Calu3 (cell line): ENCODE measurements at regions of chr6 and their contacts with region 1.

Region 1: DNA sequence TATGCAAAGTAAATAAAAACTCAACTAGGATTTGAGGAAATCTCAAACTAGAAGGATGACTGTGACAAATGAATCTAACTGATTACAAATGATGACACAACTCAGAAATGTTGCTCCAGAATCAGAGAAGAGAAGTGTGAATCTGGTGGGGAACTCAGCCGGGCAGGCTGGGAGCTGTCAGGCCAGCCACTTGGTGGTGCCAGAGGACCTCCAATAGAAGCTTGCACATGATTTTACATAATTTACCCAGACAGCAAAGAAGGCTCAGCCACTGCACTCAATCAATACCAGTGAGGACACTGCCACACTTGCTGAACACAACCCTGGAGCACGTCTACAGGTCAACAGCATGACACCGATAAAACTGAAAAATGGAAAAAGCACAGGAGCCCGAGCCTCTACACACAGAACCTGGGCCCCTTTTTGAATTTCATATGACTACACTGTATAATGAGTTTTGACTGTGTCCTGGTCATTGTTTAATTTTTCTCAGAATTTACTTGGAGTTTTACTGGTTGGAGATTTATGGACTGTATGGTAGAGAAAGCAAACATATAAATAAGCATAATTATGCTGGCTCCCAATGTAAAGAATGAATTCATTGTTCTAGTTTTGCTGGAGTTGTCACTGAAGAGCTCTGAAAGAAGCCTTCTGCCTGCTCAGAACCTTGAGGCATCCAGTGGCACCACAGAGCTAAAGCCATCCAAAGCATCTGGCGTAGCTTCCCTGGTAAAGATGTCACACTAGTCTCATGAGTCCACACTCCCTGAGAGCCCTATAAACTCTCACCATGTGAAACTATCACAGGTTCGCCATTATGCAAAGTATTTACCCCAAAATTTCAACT is 296.5 kb downstream of the THBS2 start:
- DNase-seq: peak; percentile 80
- H3K4me3 Mint-ChIP-seq: no peak overlapping the region
- H3K27ac Mint-ChIP-seq: peak overlapping the region; percentile 95
- H3K4me1 Mint-ChIP-seq: peaks cover 22% of the 10 kb centered on the region
- H3K27me3 Mint-ChIP-seq: no peaks in the 10 kb centered on the region
- CTCF ChIP-seq: peak; percentile 80

Region 2: DNA sequence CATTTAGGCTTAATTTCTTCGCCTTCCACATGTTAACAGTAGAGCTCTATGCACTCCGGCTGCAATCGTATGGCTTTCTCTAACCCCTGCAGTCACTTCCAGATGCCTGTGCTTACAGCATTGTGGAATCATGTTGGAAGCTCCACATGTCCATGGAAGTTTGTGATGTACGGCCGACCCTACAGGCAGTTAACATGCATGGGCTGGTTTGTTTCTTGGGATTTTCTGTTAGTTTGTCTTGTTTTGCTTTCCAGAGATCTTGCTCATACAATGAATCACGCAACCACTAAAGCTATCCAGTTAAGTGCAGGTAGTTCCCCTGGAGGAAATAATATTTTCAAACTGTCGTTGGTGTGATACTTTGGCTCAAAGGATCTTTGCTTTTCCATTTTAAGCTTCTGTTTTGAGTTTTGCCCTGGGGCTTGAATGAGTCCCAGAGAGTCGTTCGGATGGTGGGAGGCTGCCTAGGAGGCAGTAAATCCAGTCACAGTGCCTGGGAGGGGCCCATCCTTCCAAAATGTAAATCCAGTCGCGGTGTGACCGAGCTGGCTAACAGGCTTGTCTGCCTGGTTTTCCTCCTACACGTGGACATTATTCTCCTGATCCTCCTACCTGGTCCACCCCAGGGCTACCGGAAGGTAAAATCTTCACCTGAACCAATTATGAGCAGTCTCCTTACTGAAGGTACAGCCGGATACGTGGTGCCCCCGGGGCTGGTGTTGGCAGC is 290.2 kb before region 1 on chr6:
- CTCF ChIA-PET with region 1: no interaction called
- intact Hi-C with region 1: no loop called
- DNase-seq: no peak
- H3K4me3 Mint-ChIP-seq: no peak overlapping the region
- H3K27ac Mint-ChIP-seq: peak overlapping the region; percentile 83
- H3K4me1 Mint-ChIP-seq: peaks cover 46% of the 10 kb centered on the region
- H3K27me3 Mint-ChIP-seq: no peaks in the 10 kb centered on the region
- CTCF ChIP-seq: no peak

Region 3: DNA sequence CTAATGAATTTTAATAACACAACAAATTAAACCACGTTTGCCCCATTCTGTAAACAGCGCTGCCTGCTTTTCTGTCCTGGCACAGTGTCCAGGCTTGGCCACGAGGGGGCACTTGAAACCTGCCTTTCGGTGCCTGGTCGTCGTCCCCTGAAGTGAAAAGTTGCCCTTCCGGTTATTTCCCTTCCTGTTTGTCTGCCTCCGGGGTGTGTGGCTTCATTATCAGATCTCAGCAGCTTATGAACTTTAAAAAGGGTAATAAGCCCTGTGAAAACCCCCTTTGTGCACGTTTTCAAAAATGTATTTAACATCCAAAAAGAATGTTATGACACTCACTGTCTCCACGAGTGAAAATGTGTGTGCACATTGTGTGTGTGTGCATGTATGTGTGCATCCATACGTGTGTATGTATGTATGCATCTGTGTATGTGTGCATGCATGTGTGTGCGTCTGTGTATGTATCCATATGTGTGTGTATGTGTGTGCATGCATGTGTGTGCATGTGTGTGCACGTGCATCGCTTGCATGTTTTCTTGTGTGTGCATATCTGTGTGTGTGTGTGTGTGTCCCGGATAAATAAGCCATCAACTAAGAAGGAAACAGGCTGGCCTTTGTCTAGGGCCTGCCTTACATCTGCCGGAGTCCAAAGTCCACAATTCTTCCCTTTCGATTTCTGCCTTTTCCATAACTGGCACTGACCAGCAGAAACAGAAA is 61.9 kb before region 1 on chr6:
- CTCF ChIA-PET with region 1: interaction called, 5 read pairs
- intact Hi-C with region 1: loop called (anchors 5 kb)
- DNase-seq: peak; percentile 93
- H3K4me3 Mint-ChIP-seq: peak overlapping the region; percentile 65
- H3K27ac Mint-ChIP-seq: peak overlapping the region; percentile 86
- H3K4me1 Mint-ChIP-seq: peaks cover 29% of the 10 kb centered on the region
- H3K27me3 Mint-ChIP-seq: no peaks in the 10 kb centered on the region
- CTCF ChIP-seq: peak; percentile 89

Region 4: GRCh38 chr6:169326067-169326799 is 369.1 kb after region 1 on chr6:
- CTCF ChIA-PET with region 1: interaction called, 3 read pairs
- intact Hi-C with region 1: loop called (anchors 10 kb)
- DNase-seq: peak; percentile 63
- H3K4me3 Mint-ChIP-seq: no peak overlapping the region
- H3K27ac Mint-ChIP-seq: no peak overlapping the region
- H3K4me1 Mint-ChIP-seq: no peaks in the 10 kb centered on the region
- H3K27me3 Mint-ChIP-seq: no peaks in the 10 kb centered on the region
- CTCF ChIP-seq: no peak

Region 5: DNA sequence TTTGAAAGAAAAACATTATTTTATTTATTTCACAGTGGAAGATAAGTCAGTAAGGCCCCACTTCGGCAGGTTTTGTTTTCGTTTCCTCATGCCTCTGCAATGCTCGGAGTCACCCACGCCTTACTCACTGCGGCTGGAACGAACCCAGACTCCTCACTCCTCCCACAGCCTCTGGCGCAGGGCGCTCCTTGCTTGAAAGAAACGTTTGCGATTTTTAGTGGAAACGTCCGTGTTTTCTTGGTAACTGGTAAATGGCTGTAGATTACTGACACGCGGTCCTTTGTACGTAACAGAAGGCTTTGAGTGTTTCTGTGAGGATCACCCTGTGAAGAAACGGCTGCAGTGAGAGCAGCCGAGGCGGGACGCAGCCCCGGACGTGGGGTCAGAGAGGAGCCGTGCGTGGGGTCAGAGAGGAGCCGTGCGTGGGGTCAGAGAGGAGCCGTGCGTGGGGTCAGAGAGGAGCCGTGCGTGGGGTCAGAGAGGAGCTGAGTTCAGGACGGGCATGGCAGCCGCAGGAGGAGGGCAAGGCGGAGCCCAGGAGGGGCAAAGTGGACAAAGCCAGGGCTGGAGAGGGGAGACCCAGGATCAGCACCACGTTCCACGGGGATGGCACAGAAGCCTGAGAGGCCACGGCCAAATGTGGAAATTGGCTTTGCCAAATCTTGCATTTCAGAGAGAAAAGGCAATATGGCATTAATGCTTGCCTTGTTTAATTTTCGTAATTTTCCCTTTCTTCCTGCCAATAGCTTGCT is 495.2 kb after region 1 on chr6:
- CTCF ChIA-PET with region 1: no interaction called
- intact Hi-C with region 1: loop called (anchors 2 kb)
- DNase-seq: peak; percentile 65
- H3K4me3 Mint-ChIP-seq: peak overlapping the region; percentile 72
- H3K27ac Mint-ChIP-seq: peak overlapping the region; percentile 87
- H3K4me1 Mint-ChIP-seq: peaks cover 39% of the 10 kb centered on the region
- H3K27me3 Mint-ChIP-seq: no peaks in the 10 kb centered on the region
- CTCF ChIP-seq: no peak

Region 6: GRCh38 chr6:169520104-169520503 is 563.0 kb after region 1 on chr6:
- CTCF ChIA-PET with region 1: no interaction called
- intact Hi-C with region 1: loop called (anchors 2 kb)
- DNase-seq: no peak
- H3K4me3 Mint-ChIP-seq: no peak overlapping the region
- H3K27ac Mint-ChIP-seq: no peak overlapping the region
- H3K4me1 Mint-ChIP-seq: no peaks in the 10 kb centered on the region
- H3K27me3 Mint-ChIP-seq: no peaks in the 10 kb centered on the region
- CTCF ChIP-seq: peak; percentile 23

Region 7: GRCh38 chr6:169701954-169702839 is 745.1 kb after region 1 on chr6 and contains the starts of genes C6orf120 and WDR27:
- CTCF ChIA-PET with region 1: no interaction called
- intact Hi-C with region 1: loop called (anchors 5 kb)
- DNase-seq: peak; percentile 96
- H3K4me3 Mint-ChIP-seq: peak within 1 kb of the TSS; percentile 94
- H3K27ac Mint-ChIP-seq: peak within 1 kb of the TSS; percentile 67
- H3K4me1 Mint-ChIP-seq: peaks cover 14% of the 10 kb centered on the region
- H3K27me3 Mint-ChIP-seq: no peaks in the 10 kb centered on the region
- CTCF ChIP-seq: no peak
- total RNA-seq, gene C6orf120: 20.9 and 25.0 TPM in 2 replicates
- total RNA-seq, gene WDR27: 70.6 and 77.9 TPM in 2 replicates

Region 8: GRCh38 chr6:170529839-170530469 is 1572.8 kb after region 1 on chr6:
- CTCF ChIA-PET with region 1: no interaction called
- intact Hi-C with region 1: loop called (anchors 10 kb)
- DNase-seq: peak; percentile 58
- H3K4me3 Mint-ChIP-seq: no peak overlapping the region
- H3K27ac Mint-ChIP-seq: no peak overlapping the region
- H3K4me1 Mint-ChIP-seq: no peaks in the 10 kb centered on the region
- H3K27me3 Mint-ChIP-seq: no peaks in the 10 kb centered on the region
- CTCF ChIP-seq: peak; percentile 48